HEK293 (cell line): ENCODE measurements at regions of chr6 and their contacts with region 1.

Region 1: DNA sequence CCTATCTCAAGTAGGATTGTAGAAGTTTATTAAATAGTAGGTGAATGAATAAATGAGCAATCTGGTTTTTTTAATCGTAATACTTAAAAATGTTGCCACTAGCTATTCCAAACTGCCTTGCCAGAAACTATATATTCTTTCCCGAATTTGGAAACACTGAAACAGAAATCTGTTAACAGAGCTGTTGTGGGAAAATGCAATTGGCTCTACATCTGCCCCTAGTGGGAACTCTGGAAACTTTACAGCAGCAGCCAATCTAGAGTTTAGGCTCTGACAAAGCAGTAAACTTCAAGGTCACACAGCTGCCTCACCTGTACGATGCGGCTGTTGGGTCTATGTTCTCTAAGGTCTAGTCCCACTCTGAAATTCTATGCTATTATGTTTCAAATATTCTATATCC is 41.7 kb downstream of the SYNE1 start:
- H3K4me3 ChIP-seq: no peak overlapping the region
- H3K27ac ChIP-seq: no peak overlapping the region
- H3K4me1 ChIP-seq: no peaks in the 10 kb centered on the region
- CTCF ChIP-seq: 0 out of 2 replicates have a peak, but pooled peaks have one; percentile 24

Region 2: GRCh38 chr6:152078804-152079203 is 516.7 kb before region 1 on chr6:
- CTCF ChIA-PET with region 1: no interaction called
- POLR2A ChIA-PET with region 1: no interaction called
- H3K4me3 ChIP-seq: no peak overlapping the region
- H3K27ac ChIP-seq: no peak overlapping the region
- H3K4me1 ChIP-seq: no peaks in the 10 kb centered on the region
- CTCF ChIP-seq: no peak

Region 3: DNA sequence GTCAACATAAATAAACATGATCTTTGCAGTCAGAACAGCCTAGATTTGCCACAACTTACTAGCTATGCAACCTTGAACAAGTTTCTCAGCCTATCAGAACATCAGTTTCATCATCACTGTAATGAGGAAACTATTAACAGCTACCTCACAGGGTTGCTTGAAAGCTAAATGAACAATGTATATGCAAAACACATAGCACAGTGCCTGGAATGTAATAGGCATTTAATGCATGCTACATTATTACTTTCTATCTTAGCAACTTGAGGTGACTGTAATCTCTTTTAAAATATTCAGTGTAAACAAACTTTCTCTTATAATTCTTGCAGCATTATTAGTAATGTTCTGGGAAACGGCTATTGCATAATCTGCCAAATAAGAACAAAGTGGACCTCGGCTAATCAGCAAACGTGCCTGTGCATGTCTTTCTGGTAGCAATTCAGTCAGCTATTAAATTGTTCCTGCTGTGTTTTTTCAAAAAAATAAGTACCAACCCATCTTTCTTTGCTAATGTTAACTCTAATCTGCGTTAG is 19.8 kb before region 1 on chr6:
- CTCF ChIA-PET with region 1: interaction called, 22 read pairs
- POLR2A ChIA-PET with region 1: interaction called, 4 read pairs
- H3K4me3 ChIP-seq: no peak overlapping the region
- H3K27ac ChIP-seq: no peak overlapping the region
- H3K4me1 ChIP-seq: peaks cover 34% of the 10 kb centered on the region
- CTCF ChIP-seq: no peak